ENCODE measurements at regions of chr5 and their contacts with region 1.

Region 1: DNA sequence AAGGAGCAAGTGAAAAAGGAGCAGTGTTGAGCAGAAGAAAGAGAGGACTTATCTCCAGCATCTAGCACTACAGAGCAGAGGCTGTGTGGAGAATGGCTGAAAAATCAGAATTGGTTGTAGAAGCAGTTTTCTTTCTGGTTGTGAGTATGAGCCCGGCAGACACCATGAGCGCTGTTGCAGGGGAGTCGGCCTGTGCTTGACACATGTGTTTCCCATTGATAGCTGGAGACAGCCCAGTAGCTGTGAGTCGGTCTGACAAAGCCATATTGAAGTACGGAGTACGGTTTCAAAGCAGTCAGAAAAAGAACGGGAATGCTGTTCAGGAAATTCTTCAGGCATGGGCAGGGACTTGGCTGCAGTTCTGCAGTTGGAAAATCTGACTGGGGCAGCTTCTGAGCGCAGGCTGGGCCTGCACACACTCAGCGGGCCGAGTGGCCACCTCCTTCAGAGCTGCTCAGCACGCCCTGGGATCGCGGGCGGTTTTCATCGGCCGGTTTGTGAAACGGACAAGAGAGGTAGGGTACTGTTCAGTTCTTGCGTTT is at the start of gene SGCD:
- DNase-seq: peak; percentile 90
- ATAC-seq: peak; percentile 94
- H3K4me3 ChIP-seq: peak within 1 kb of the TSS; percentile 72
- H3K27ac ChIP-seq: peak within 1 kb of the TSS; percentile 89
- H3K4me1 ChIP-seq: peaks cover 10% of the 10 kb centered on the region
- H3K27me3 ChIP-seq: no peaks in the 10 kb centered on the region
- CTCF ChIP-seq: no peak
- POLR2A ChIP-seq: peak; percentile 56
- RAD21 ChIP-seq: peak; percentile 33; the same call in 1 of the 2 replicates
- total RNA-seq, gene SGCD: 10.6 TPM in 2 replicates

Region 2: DNA sequence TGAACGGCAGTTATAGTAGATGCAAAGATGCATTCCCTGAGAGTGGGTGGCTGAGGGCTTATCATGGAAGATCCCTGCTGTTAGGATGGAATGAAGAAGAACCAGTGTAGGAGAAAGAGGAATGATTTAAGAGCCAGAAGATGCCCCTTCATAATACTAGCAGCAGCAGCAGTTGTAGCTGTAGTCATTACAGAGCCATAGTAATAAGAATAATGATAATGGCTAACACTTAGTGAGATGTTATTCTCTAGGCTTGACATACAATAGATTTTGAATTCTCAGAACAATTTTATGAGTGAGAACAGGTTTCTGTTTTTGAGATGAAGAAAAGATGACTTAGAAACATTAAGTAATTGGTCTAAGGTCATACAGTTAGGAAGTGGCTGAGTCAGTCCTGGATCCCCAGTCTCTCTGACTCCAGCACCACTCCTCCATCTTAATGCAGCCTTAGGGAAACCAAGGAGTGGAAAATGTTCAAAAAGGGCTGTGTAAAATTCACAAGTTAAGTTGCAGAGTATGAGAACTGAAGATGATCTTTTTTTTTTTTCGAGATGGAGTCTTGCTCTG is 459.2 kb before region 1 on chr5:
- CTCF ChIA-PET with region 1: no interaction called
- POLR2A ChIA-PET with region 1: interaction called, 13 read pairs
- dilution Hi-C with region 1: no loop called
- in situ Hi-C with region 1: no loop called
- intact Hi-C with region 1: no loop called
- DNase-seq: no peak
- ATAC-seq: no peak
- H3K4me3 ChIP-seq: no peak overlapping the region
- H3K27ac ChIP-seq: no peak overlapping the region
- H3K4me1 ChIP-seq: no peaks in the 10 kb centered on the region
- H3K27me3 ChIP-seq: no peaks in the 10 kb centered on the region
- CTCF ChIP-seq: no peak
- POLR2A ChIP-seq: no peak
- RAD21 ChIP-seq: no peak

Region 3: GRCh38 chr5:156120777-156121176 is 206.0 kb before region 1 on chr5:
- CTCF ChIA-PET with region 1: no interaction called
- POLR2A ChIA-PET with region 1: no interaction called
- dilution Hi-C with region 1: no loop called
- in situ Hi-C with region 1: no loop called
- intact Hi-C with region 1: loop called (anchors 2 kb)
- DNase-seq: no peak
- ATAC-seq: peak; percentile 50
- H3K4me3 ChIP-seq: no peak overlapping the region
- H3K27ac ChIP-seq: peak overlapping the region; percentile 72
- H3K4me1 ChIP-seq: peaks cover 6% of the 10 kb centered on the region
- H3K27me3 ChIP-seq: no peaks in the 10 kb centered on the region
- CTCF ChIP-seq: no peak
- POLR2A ChIP-seq: no peak
- RAD21 ChIP-seq: no peak

Region 4: GRCh38 chr5:156475182-156476157 is 148.7 kb after region 1 on chr5:
- CTCF ChIA-PET with region 1: no interaction called
- POLR2A ChIA-PET with region 1: no interaction called
- dilution Hi-C with region 1: no loop called
- in situ Hi-C with region 1: no loop called
- intact Hi-C with region 1: loop called (anchors 5 kb)
- DNase-seq: peak; percentile 98
- ATAC-seq: peak; percentile 91
- H3K4me3 ChIP-seq: no peak overlapping the region
- H3K27ac ChIP-seq: peak overlapping the region; percentile 89; the same call in 1 of the 2 replicates
- H3K4me1 ChIP-seq: peaks cover 14% of the 10 kb centered on the region
- H3K27me3 ChIP-seq: no peaks in the 10 kb centered on the region
- CTCF ChIP-seq: peak; percentile 44
- POLR2A ChIP-seq: no peak
- RAD21 ChIP-seq: peak; percentile 48

Region 5: DNA sequence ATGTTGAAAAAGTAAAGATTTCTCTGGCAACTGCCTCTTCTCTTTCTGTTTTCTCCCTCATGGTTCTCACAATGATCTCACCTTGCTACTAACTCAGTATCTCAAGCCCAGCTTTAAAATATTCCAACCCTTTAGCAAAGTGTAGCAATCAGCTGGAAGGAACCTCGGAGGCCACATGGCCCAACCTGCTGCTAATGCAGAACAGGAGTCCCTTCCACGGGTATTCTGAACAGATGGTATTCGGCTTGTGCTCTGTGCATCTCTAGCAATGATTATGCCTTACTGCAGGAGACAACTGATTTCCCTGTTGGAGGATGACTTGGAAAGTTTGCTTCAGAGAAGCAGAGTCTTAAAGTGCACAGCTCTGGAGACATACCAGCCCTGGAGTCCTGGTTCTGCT is 371.5 kb after region 1 on chr5:
- CTCF ChIA-PET with region 1: no interaction called
- POLR2A ChIA-PET with region 1: no interaction called
- dilution Hi-C with region 1: no loop called
- in situ Hi-C with region 1: no loop called
- intact Hi-C with region 1: no loop called
- DNase-seq: no peak
- ATAC-seq: no peak
- H3K4me3 ChIP-seq: no peak overlapping the region
- H3K27ac ChIP-seq: no peak overlapping the region
- H3K4me1 ChIP-seq: no peaks in the 10 kb centered on the region
- H3K27me3 ChIP-seq: no peaks in the 10 kb centered on the region
- CTCF ChIP-seq: no peak
- POLR2A ChIP-seq: no peak
- RAD21 ChIP-seq: no peak

Region 6: DNA sequence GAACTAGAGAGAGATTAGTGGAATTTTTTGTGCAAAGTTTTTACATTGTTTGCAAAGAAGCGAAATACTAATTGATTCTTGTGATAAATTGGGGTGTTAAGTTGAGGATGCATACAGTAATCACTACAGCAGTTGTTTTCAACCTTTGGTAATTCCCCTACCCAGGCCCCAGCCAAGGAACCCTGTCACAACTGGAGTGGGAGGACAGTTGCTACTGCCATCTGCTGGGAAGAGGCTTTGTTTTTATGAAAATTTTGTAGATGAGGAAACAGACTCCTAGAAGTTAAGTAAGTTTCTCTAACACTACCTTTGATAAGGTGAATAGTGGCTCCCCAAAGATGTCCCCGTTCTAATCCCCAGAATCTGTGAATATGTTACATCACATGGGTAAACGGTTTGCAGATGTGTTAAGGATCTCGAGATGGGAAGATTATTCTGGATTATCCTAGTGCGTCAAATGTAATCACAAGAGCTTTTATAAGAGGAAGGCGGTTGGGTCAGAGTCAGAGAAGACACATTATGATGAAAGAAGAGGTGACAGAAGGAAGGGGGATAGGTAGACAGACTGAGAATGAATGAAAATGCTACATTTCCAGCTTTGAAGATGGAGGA is 489.3 kb after region 1 on chr5:
- CTCF ChIA-PET with region 1: no interaction called
- POLR2A ChIA-PET with region 1: no interaction called
- dilution Hi-C with region 1: no loop called
- in situ Hi-C with region 1: no loop called
- intact Hi-C with region 1: loop called (anchors 1 kb)
- DNase-seq: peak; percentile 42
- ATAC-seq: peak; percentile 86
- H3K4me3 ChIP-seq: no peak overlapping the region
- H3K27ac ChIP-seq: no peak overlapping the region
- H3K4me1 ChIP-seq: no peaks in the 10 kb centered on the region; the same call in 1 of the 2 replicates
- H3K27me3 ChIP-seq: no peaks in the 10 kb centered on the region
- CTCF ChIP-seq: peak; percentile 65
- POLR2A ChIP-seq: no peak
- RAD21 ChIP-seq: peak; percentile 80